CD4-positive, alpha-beta T cell (primary cell): ENCODE measurements at regions of chr10 and their contacts with region 1.

Region 1: DNA sequence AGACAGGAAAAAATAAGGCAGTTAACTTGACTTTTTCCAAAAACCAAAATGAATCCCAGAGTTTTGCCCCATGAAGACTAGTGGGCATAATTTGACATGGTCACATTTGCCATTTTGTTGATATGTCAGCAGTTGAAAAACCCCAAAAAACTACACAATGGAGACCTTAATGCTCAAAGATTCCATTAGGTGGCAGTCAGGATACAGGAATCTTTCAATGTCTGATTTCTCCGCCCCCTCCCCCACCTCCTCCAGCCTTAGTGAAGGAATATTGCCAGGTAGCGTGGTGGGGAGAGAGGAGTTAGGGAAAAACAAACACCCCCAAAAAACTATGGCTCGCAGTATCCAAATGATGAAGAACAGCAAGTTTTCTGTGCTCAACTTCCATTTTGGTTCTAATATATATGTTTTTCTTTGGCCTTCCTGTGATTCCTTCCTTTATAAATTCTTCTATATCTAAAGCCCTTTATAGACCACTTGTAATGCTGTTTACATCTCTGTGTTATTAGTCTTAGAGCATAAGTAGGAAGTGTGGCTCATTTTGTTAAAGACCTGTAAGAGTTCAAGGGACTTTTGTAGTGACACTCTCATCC is 6.7 kb upstream of the SMNDC1 start:
- DNase-seq: peak in 13 of 14 experiments; percentile 4 to 77 (median 22)
- ATAC-seq: peak; percentile 79
- H3K4me3 ChIP-seq: no peak overlapping the region
- H3K4me3 Mint-ChIP-seq: no peak overlapping the region
- H3K27ac ChIP-seq: no peak overlapping the region
- H3K27ac Mint-ChIP-seq: no peak overlapping the region
- H3K4me1 ChIP-seq: no peaks in the 10 kb centered on the region
- H3K4me1 Mint-ChIP-seq: no peaks in the 10 kb centered on the region
- H3K27me3 ChIP-seq: no peaks in the 10 kb centered on the region
- H3K27me3 Mint-ChIP-seq: no peaks in the 10 kb centered on the region
- CTCF ChIP-seq: peak; percentile 67

Region 2: GRCh38 chr10:110547139-110547761 is 235.8 kb after region 1 on chr10:
- CTCF ChIA-PET with region 1: interaction called, 21 read pairs
- POLR2A ChIA-PET with region 1: interaction called, 11 read pairs
- intact Hi-C with region 1: loop called (anchors 1 kb)
- DNase-seq: peak in 3 of 14 experiments; percentile 77 to 79 (median 78)
- ATAC-seq: peak; percentile 80
- H3K4me3 ChIP-seq: no peak overlapping the region
- H3K4me3 Mint-ChIP-seq: no peak overlapping the region
- H3K27ac ChIP-seq: no peak overlapping the region
- H3K27ac Mint-ChIP-seq: no peak overlapping the region
- H3K4me1 ChIP-seq: no peaks in the 10 kb centered on the region
- H3K4me1 Mint-ChIP-seq: peaks cover 6% of the 10 kb centered on the region
- H3K27me3 ChIP-seq: peaks cover 0 to 10% of the 10 kb centered on the region in 2 experiments
- H3K27me3 Mint-ChIP-seq: peaks cover 21% of the 10 kb centered on the region
- CTCF ChIP-seq: peak; percentile 92

Region 3: DNA sequence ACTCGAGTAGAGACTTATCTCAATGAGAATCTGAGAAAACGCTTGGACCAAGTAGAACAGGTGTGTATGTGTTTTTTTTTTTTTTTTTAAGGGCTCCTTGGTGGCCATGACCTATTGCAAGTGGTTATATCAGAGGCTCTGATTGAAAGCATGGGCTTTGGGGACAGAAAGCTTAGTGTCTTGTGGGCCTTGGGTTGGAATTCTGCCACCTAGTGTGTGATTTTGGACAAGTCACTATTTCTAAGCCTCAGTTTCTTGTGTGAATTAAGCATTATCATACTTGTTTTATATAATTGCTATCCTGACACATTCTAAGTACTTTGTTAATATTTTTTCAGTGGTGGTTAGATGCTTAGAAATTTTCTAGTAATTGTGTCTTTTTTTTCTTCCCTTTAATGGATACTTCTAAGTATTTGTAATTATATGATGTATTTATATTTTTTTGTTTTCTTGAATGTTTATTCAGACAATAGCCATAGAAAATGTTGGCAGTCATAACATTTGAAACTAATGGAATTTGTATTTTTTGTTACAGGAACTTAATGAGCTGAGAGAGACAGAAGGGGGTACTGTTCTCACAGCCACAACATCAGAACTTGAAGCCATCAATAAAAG is 289.1 kb after region 1 on chr10:
- CTCF ChIA-PET with region 1: interaction called, 21 read pairs
- POLR2A ChIA-PET with region 1: no interaction called
- intact Hi-C with region 1: loop called (anchors 1 to 2 kb)
- DNase-seq: peak in 4 of 14 experiments; percentile 41 to 74 (median 64)
- ATAC-seq: peak; percentile 54
- H3K4me3 ChIP-seq: no peak overlapping the region
- H3K4me3 Mint-ChIP-seq: no peak overlapping the region
- H3K27ac ChIP-seq: no peak overlapping the region
- H3K27ac Mint-ChIP-seq: no peak overlapping the region
- H3K4me1 ChIP-seq: no peaks in the 10 kb centered on the region
- H3K4me1 Mint-ChIP-seq: no peaks in the 10 kb centered on the region
- H3K27me3 ChIP-seq: no peaks in the 10 kb centered on the region
- H3K27me3 Mint-ChIP-seq: no peaks in the 10 kb centered on the region
- CTCF ChIP-seq: peak; percentile 46

Region 4: GRCh38 chr10:112137154-112137987 is 1825.9 kb after region 1 on chr10:
- CTCF ChIA-PET with region 1: no interaction called
- POLR2A ChIA-PET with region 1: no interaction called
- intact Hi-C with region 1: loop called in 1 of 2 experiments (anchors 10 kb)
- DNase-seq: peak; percentile 32 to 66 (median 47)
- ATAC-seq: peak; percentile 46
- H3K4me3 ChIP-seq: no peak overlapping the region
- H3K4me3 Mint-ChIP-seq: no peak overlapping the region
- H3K27ac ChIP-seq: no peak overlapping the region
- H3K27ac Mint-ChIP-seq: no peak overlapping the region
- H3K4me1 ChIP-seq: peaks cover 4% of the 10 kb centered on the region
- H3K4me1 Mint-ChIP-seq: no peaks in the 10 kb centered on the region
- H3K27me3 ChIP-seq: no peaks in the 10 kb centered on the region
- H3K27me3 Mint-ChIP-seq: no peaks in the 10 kb centered on the region
- CTCF ChIP-seq: peak; percentile 77